ENCODE measurements at regions of chr22 and their contacts with region 1.

Region 1: GRCh38 chr22:28442264-28442710 is 237.4 kb downstream of the TTC28 start:
- ATAC-seq: peak; percentile 83 to 96 (median 94)
- H3K4me3 ChIP-seq: peak overlapping the region; percentile 33 to 60 (median 44)
- H3K27ac ChIP-seq: peak overlapping the region; percentile 34 to 57
- H3K4me1 ChIP-seq: peaks cover 28 to 38% of the 10 kb centered on the region in 2 donors

Region 2: GRCh38 chr22:28051787-28052356 is 390.4 kb before region 1 on chr22:
- in situ Hi-C with region 1: loop called in 3 of 9 experiments (anchors 25 kb)
- ATAC-seq: peak; percentile 19 to 69 (median 41)
- H3K4me3 ChIP-seq: no peak overlapping the region
- H3K27ac ChIP-seq: no peak overlapping the region
- H3K4me1 ChIP-seq: peaks cover 9 to 27% of the 10 kb centered on the region in 2 donors